BJ (cell line): ENCODE measurements at regions of chr5 and their contacts with region 1.

Region 1: DNA sequence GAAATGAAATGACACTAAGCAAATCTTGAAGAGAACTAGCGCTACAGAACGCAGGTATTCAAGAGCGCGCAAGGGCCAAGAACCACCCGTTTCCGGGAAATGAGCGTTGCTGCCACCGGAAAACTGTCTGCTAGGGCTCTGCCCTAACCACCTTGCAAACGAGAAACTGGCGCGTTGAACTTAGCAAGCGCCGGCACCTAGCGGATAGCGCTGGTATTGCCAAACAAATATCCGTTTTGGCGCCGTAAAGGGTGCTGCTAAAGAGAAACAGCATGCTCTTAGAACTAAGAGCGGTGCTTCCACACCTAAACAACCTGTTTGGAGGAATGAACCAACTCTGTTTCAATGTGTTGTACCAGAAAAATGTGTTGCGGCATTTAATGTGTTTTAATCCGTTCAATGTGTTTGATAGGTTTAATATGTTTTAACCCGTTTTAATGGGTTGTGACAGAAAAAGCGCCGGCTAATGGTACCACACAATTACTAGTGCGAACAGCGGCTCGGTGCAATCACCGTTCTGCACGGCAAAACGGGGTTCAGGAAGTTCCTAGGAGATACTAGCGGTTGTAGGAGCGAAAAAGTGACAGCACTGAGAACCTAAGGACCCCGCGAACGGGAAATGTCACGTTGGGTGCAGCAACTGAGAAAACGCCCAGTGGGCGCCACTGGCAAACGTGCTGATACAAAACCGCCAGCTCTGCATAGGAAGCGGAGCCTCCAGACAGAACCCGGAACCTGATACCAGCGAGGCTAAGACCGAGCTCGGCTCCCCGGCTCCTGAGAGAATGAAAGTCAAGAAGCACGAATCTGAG is at the start of gene ANXA2R:
- DNase-seq: peak; percentile 67
- H3K4me3 ChIP-seq: peak within 1 kb of the TSS; percentile 52
- H3K27me3 ChIP-seq: no peaks in the 10 kb centered on the region
- CTCF ChIP-seq: peak; percentile 85
- polyA plus RNA-seq, gene ANXA2R: 0.53 and 0.74 TPM in 2 replicates

Region 2: GRCh38 chr5:42950440-42951292 is 89.8 kb before region 1 on chr5:
- CTCF ChIA-PET with region 1: interaction called, 10 read pairs
- POLR2A ChIA-PET with region 1: no interaction called
- DNase-seq: peak; percentile 98
- H3K4me3 ChIP-seq: peak overlapping the region; percentile 38
- H3K27me3 ChIP-seq: no peaks in the 10 kb centered on the region
- CTCF ChIP-seq: no peak

Region 3: DNA sequence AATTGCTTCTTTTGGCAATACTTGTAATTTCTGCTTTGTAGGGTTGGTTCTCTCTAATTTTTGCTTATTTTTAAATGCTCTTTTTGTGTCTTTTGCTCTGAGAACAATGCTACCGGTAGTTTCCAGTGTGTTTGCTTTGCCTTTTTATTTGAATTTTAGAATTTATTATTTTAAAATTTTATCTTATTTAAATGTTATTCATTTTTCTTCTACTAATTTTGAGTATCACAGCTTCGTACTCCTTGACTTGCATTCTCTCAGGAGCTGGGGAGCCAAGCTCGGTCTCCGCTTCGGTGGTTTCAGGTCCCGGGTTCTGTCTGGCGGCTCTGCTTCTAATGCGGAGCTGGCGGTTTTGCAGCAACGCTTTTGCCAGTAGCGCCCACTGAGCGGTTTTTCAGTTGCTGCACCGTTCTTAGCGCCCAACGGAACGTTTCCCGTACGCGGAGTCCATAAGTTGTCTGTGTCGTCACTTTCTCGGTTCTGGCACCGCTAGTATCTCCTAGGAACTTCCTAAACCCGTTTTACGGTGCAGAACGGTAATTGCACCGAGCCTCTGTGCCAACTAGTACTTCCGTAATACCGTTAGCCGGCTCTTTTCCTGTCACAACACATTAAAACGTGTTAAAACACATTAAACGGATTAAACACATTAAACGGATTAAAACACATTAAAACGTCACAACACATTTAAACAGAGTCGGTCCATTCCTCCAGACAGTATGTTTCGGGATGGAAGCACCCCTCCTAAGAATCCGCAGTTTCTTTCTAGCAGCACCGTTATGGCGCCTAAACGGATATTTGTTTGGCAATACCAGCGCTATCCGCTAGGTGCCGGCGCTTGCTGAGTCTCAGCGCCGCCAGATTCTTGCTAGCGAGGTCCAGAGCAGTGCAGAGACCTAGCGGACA is 46.0 kb before region 1 on chr5:
- CTCF ChIA-PET with region 1: interaction called, 12 read pairs
- POLR2A ChIA-PET with region 1: no interaction called
- DNase-seq: peak; percentile 52
- H3K4me3 ChIP-seq: peak overlapping the region; percentile 36
- H3K27me3 ChIP-seq: no peaks in the 10 kb centered on the region
- CTCF ChIP-seq: peak; percentile 84

Region 4: GRCh38 chr5:43051668-43052067 is 11.2 kb after region 1 on chr5:
- CTCF ChIA-PET with region 1: interaction called, 10 read pairs
- POLR2A ChIA-PET with region 1: no interaction called
- DNase-seq: no peak
- H3K4me3 ChIP-seq: no peak overlapping the region
- H3K27me3 ChIP-seq: no peaks in the 10 kb centered on the region
- CTCF ChIP-seq: no peak

Region 5: DNA sequence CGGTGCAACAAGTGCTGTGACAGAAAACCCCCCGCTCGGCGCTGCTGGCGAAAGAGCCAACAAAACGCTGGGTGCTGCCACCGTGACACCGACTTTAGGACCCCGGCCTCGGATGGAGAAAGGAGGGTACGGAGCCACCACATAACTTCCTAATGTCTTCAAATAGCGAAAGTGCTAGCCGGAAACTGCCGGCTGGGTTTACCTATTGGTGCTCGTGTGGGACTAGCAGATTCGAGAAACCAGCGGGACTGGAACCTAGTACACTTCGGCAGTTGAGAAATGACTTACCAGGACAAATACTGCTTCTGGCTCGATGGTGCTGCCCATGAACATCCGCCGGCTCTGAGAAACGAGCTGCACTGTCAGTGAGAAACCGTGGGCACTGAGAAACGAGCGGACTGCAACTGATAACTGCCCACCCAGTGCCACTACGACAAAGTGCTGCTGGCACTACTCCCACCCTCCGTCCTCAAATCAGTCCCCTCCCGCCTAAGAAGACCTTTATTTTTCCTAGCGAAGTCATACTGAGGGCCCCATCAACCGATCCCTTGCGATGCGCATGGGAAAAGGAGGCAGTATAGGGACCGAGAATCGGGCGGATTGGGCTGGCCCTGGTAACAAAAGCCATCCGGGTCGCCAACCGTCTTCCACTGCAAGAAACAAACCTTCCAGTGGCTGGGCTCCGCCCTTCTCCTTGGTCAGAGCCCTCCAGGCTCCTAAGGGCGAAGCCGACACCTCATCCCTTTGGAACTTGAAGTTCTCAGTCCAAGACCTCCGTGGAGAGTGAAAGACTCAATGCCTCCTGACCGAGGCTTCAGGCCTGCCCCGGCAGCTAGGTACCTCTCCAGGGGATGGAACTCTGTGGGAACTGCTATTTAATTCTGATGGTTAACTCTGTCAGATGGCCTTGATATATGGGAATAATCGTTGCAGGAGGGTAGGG is 26.6 kb after region 1 on chr5:
- CTCF ChIA-PET with region 1: interaction called, 35 read pairs
- POLR2A ChIA-PET with region 1: no interaction called
- DNase-seq: no peak
- H3K4me3 ChIP-seq: peak overlapping the region; percentile 66
- H3K27me3 ChIP-seq: no peaks in the 10 kb centered on the region
- CTCF ChIP-seq: no peak